MCF 10A (cell line): ENCODE measurements at regions of chr19 and their contacts with region 1.

Region 1: GRCh38 chr19:35545001-35545911 is at the start of gene TMEM147:
- DNase-seq: peak; percentile 90
- H3K4me3 Mint-ChIP-seq: peak within 1 kb of the TSS; percentile 89
- H3K27ac Mint-ChIP-seq: peak within 1 kb of the TSS; percentile 92
- H3K4me1 Mint-ChIP-seq: peaks cover 34% of the 10 kb centered on the region
- H3K27me3 Mint-ChIP-seq: no peaks in the 10 kb centered on the region
- CTCF ChIP-seq: no peak
- total RNA-seq, gene TMEM147: 110 and 123 TPM in 2 replicates

Region 2: GRCh38 chr19:35352448-35353304 is 192.6 kb before region 1 on chr19:
- CTCF ChIA-PET with region 1: interaction called, 16 read pairs
- POLR2A ChIA-PET with region 1: no interaction called
- intact Hi-C with region 1: no loop called
- DNase-seq: peak; percentile 79
- H3K4me3 Mint-ChIP-seq: no peak overlapping the region
- H3K27ac Mint-ChIP-seq: no peak overlapping the region
- H3K4me1 Mint-ChIP-seq: peaks cover 4% of the 10 kb centered on the region
- H3K27me3 Mint-ChIP-seq: peaks cover 33% of the 10 kb centered on the region
- CTCF ChIP-seq: peak; percentile 79

Region 3: GRCh38 chr19:35518313-35518712 is 26.9 kb before region 1 on chr19:
- CTCF ChIA-PET with region 1: interaction called, 8 read pairs
- POLR2A ChIA-PET with region 1: no interaction called
- intact Hi-C with region 1: loop called (anchors 2 kb)
- DNase-seq: peak; percentile 91
- H3K4me3 Mint-ChIP-seq: no peak overlapping the region
- H3K27ac Mint-ChIP-seq: peak overlapping the region; percentile 73
- H3K4me1 Mint-ChIP-seq: peaks cover 27% of the 10 kb centered on the region
- H3K27me3 Mint-ChIP-seq: no peaks in the 10 kb centered on the region
- CTCF ChIP-seq: no peak

Region 4: GRCh38 chr19:35592226-35592625 is 47.0 kb after region 1 on chr19:
- CTCF ChIA-PET with region 1: interaction called, 15 read pairs
- POLR2A ChIA-PET with region 1: no interaction called
- intact Hi-C with region 1: no loop called
- DNase-seq: peak; percentile 61
- H3K4me3 Mint-ChIP-seq: no peak overlapping the region
- H3K27ac Mint-ChIP-seq: no peak overlapping the region
- H3K4me1 Mint-ChIP-seq: no peaks in the 10 kb centered on the region
- H3K27me3 Mint-ChIP-seq: peaks cover 11% of the 10 kb centered on the region
- CTCF ChIP-seq: peak; percentile 54

Region 5: DNA sequence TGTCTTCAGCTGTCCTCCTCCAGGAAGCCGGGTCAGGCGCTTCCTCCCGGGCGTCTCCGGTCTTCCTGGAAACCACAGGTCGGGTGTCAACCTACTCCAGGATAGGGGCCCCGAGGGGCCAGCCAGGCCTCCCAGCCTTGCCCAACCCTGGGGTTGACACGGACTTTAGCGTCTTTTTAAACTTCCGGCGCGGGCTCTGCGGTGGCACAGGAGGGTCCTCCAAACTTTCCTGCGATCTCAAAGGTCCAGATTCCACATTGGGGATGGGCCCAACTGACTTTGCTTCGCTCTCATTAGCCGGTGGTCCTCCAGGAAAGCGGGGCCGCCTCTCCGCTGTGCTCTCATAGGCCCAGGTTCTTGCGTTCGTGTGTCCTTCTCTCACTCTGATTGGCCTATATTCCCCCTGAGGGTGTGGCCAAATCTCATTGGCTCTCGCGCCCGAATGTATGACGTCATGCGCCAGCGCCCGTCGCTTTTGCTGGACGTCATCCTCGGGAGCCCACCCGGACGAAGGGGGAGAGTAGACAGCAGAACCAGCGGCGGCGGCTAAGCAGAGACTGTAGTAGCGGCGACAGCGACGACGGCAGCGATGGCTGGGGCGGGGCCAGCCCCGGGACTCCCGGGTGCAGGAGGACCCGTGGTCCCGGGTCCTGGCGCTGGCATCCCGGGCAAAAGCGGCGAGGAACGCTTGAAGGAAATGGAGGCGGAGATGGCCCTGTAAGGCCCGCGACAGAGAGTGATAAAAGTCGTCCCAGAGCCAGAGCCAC is 83.5 kb after region 1 on chr19 and contains the start of gene RBM42:
- CTCF ChIA-PET with region 1: interaction called, 5 read pairs
- POLR2A ChIA-PET with region 1: no interaction called
- intact Hi-C with region 1: loop called (anchors 5 kb)
- DNase-seq: peak; percentile 100
- H3K4me3 Mint-ChIP-seq: peak within 1 kb of the TSS; percentile 87
- H3K27ac Mint-ChIP-seq: peak within 1 kb of the TSS; percentile 97
- H3K4me1 Mint-ChIP-seq: peaks cover 10% of the 10 kb centered on the region
- H3K27me3 Mint-ChIP-seq: no peaks in the 10 kb centered on the region
- CTCF ChIP-seq: no peak
- total RNA-seq, gene RBM42: 84.2 and 87.7 TPM in 2 replicates

Region 6: GRCh38 chr19:35657904-35658700 is 112.8 kb after region 1 on chr19:
- CTCF ChIA-PET with region 1: no interaction called
- POLR2A ChIA-PET with region 1: no interaction called
- intact Hi-C with region 1: no loop called
- DNase-seq: no peak
- H3K4me3 Mint-ChIP-seq: no peak overlapping the region
- H3K27ac Mint-ChIP-seq: no peak overlapping the region
- H3K4me1 Mint-ChIP-seq: no peaks in the 10 kb centered on the region
- H3K27me3 Mint-ChIP-seq: no peaks in the 10 kb centered on the region
- CTCF ChIP-seq: no peak